ENCODE measurements at regions of chr14 and their contacts with region 1.

Region 1: DNA sequence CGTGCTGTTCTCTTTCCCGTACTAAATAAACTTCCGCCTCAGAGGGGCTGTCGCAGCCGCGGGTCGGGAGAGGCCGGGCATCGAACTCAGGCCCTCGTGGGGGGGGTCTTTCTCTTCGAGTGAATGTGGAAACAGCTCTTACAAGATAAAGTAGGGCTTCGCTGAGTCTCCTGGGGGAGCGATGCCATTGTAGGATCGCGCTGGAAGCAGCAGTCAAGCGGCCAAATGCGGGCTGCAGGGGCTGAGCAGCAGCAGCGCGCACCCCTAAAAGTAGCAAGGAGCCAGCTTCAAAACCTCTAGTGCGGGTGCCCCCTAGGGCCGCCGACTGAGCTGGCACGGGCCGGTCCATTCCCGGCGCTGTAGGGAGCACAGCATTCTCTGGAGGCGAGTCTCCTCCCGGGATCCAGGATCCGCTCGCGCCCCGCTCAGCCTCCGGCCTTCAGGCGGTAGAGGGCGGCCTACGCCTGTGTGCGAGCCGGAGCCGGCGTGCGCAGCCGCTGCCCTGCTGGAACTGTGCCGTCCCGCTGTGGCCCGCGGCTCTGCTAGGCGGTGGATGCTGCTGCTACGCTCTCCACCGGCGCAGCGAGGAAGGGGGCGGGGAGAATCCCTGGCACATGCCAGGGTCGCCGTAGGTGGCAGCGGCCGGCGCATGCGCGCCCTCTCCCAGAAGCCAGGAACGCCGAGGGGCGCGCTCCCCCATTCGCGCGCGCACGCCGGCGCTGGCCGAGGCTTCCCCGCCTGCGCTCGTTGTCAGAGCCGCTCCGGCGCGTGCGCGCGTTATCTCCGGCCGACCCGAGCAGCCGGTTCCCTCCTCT is at the start of gene FUT8:
- DNase-seq: peak; percentile 94
- ATAC-seq: peak; percentile 80
- H3K4me3 ChIP-seq: peak within 1 kb of the TSS; percentile 95
- H3K27ac ChIP-seq: peak within 1 kb of the TSS; percentile 86
- H3K4me1 ChIP-seq: no peaks in the 10 kb centered on the region
- H3K27me3 ChIP-seq: no peaks in the 10 kb centered on the region
- CTCF ChIP-seq: peak; percentile 84
- POLR2A ChIP-seq: peak; percentile 52; the same call in 1 of the 2 replicates
- RAD21 ChIP-seq: peak; percentile 75
- total RNA-seq, gene FUT8: 60.0 and 72.9 TPM in 2 replicates

Region 2: DNA sequence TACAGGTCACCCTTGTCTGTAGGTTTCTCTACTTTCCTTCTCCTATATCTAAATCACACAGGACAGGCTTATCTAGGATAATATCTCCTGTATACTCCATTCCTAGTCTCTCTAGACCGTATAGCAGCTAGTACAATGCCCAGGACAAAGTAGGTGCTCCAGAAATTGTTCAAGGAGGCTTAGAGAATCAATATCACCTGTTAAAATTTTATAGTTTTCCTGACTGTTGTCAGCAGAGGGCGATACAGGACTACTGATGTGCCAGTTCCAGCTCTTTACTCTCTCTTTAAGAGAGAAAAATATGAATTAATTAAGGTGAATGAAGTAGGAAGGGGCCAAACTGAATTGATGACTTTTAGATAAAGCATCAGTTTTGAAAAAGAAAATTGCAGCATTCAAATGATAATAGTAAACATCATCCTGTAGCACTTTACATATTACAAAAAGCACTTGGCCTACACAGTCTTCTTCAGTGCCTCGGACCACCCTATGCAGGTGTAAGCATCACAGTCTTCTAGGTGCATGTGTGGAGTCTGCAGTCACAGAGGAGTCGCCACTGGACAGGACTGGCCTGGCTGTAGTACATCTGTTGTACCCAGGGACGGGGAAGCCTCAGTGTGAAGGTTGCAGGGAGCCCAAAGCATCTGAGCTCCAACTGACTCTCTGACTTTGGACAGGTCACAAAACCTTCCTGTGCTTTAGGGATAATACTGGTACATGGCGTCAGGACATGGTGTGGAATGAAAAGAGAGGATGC is 248.0 kb before region 1 on chr14:
- CTCF ChIA-PET with region 1: interaction called, 8 read pairs
- POLR2A ChIA-PET with region 1: interaction called, 3 read pairs
- dilution Hi-C with region 1: no loop called
- in situ Hi-C with region 1: loop called (anchors 5 kb)
- intact Hi-C with region 1: loop called (anchors 1 kb)
- DNase-seq: peak; percentile 61
- ATAC-seq: peak; percentile 79
- H3K4me3 ChIP-seq: no peak overlapping the region
- H3K27ac ChIP-seq: no peak overlapping the region
- H3K4me1 ChIP-seq: peaks cover 5% of the 10 kb centered on the region
- H3K27me3 ChIP-seq: no peaks in the 10 kb centered on the region
- CTCF ChIP-seq: peak; percentile 86
- POLR2A ChIP-seq: 0 out of 2 replicates have a peak, but pooled peaks have one; percentile 36
- RAD21 ChIP-seq: peak; percentile 94

Region 3: DNA sequence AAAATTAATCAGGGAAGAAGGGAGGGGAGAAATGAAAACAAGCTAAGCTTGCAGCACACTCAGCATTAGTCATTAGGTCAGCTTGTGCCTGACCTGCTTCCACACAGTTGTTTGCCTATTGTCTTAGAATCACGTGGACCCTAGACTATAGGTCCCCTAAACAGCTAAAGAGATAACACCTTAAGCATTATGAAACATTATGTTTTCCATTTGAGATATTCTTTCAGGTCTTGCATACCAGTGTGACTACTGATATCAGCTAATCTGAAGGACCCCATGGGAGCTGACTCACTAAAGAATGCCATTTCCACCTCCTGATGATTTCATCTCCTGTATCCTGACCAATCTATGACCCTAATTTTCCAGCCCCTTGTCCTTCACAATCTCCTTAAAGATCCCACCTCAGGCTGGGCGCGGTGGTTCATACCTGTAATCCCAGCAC is 153.8 kb before region 1 on chr14:
- CTCF ChIA-PET with region 1: no interaction called
- POLR2A ChIA-PET with region 1: no interaction called
- dilution Hi-C with region 1: no loop called
- in situ Hi-C with region 1: no loop called
- intact Hi-C with region 1: loop called (anchors 1 kb)
- DNase-seq: peak; percentile 79
- ATAC-seq: peak; percentile 50
- H3K4me3 ChIP-seq: no peak overlapping the region
- H3K27ac ChIP-seq: no peak overlapping the region
- H3K4me1 ChIP-seq: peaks cover 28% of the 10 kb centered on the region
- H3K27me3 ChIP-seq: no peaks in the 10 kb centered on the region
- CTCF ChIP-seq: no peak
- POLR2A ChIP-seq: no peak
- RAD21 ChIP-seq: no peak

Region 4: DNA sequence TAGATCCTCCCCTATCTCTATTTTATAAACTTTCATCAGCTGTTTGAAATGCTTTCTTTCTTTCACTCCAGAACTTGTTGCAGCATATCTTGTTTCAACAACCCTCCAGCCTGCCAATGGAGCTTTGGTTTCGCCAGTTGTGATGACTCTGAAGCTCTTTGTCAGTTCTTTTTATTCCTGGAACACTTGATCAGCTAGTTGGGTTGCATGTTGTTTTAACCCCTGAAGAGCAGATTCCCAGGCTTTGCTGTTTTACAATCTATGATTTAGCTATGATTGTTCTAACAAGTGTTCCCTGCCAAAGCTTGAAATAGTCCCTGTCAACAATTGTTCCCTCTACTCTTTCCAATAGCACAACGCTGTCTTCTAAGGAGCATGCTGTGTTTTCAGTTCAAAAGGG is 50.3 kb before region 1 on chr14:
- CTCF ChIA-PET with region 1: interaction called, 4 read pairs
- POLR2A ChIA-PET with region 1: no interaction called
- dilution Hi-C with region 1: no loop called
- in situ Hi-C with region 1: no loop called
- intact Hi-C with region 1: loop called (anchors 5 kb)
- DNase-seq: peak; percentile 90
- ATAC-seq: peak; percentile 84
- H3K4me3 ChIP-seq: no peak overlapping the region
- H3K27ac ChIP-seq: peak overlapping the region; percentile 58; the same call in 1 of the 2 replicates
- H3K4me1 ChIP-seq: no peaks in the 10 kb centered on the region
- H3K27me3 ChIP-seq: no peaks in the 10 kb centered on the region
- CTCF ChIP-seq: no peak
- POLR2A ChIP-seq: no peak
- RAD21 ChIP-seq: no peak

Region 5: GRCh38 chr14:65392296-65392695 is 19.9 kb before region 1 on chr14:
- CTCF ChIA-PET with region 1: no interaction called
- POLR2A ChIA-PET with region 1: no interaction called
- dilution Hi-C with region 1: no loop called
- in situ Hi-C with region 1: no loop called
- intact Hi-C with region 1: no loop called
- DNase-seq: no peak
- ATAC-seq: no peak
- H3K4me3 ChIP-seq: no peak overlapping the region
- H3K27ac ChIP-seq: no peak overlapping the region
- H3K4me1 ChIP-seq: no peaks in the 10 kb centered on the region
- H3K27me3 ChIP-seq: no peaks in the 10 kb centered on the region
- CTCF ChIP-seq: no peak
- POLR2A ChIP-seq: no peak
- RAD21 ChIP-seq: no peak

Region 6: DNA sequence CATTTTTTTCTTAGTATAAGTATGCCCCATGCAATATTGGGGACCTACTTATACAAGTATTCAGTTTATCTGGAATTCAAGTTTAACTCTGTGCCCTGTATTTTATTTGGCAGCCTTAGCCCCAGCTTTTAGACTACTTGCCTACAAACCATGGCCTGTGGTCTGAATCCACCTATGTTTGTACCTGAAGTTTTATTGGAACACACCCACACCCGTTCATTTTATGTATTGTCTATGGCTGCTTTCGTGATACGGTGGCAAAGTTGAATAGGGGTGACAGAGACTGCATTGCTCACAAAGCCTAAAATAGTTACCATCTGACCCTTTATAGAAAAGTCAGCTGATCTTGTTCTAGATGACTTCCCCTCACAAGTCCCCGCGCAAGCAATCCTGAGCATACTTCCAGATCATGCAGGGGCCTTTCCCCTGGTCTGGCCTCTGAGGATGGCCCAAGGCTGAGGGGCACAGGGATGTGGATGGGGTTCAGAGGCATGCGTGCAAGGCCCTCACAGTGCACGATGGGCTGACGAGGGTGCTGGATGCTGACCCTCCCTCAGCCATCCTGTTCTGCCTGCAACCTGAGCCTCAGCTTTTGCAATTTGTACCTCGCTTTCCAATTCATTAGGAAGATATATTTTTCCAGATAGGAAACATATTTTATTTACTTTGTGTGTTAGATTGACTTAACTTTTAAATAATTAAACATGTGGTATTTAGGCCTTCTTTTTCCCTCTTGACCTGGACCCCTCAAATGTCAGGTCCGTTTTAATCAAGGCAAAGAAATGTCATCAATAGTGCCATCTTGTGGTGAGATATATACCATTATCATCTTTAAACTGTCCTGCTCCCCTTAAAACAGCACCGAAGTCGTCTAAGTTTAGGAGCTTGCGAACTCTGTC is 546.7 kb after region 1 on chr14:
- CTCF ChIA-PET with region 1: interaction called, 15 read pairs
- POLR2A ChIA-PET with region 1: no interaction called
- dilution Hi-C with region 1: no loop called
- in situ Hi-C with region 1: no loop called
- intact Hi-C with region 1: loop called (anchors 1 kb)
- DNase-seq: peak; percentile 18
- ATAC-seq: peak; percentile 65; the same call in 1 of the 2 replicates
- H3K4me3 ChIP-seq: no peak overlapping the region
- H3K27ac ChIP-seq: no peak overlapping the region
- H3K4me1 ChIP-seq: no peaks in the 10 kb centered on the region
- H3K27me3 ChIP-seq: no peaks in the 10 kb centered on the region
- CTCF ChIP-seq: peak; percentile 47
- POLR2A ChIP-seq: no peak
- RAD21 ChIP-seq: peak; percentile 42; the same call in 1 of the 2 replicates